ENCODE measurements at regions of chr17 and their contacts with region 1.

Region 1: DNA sequence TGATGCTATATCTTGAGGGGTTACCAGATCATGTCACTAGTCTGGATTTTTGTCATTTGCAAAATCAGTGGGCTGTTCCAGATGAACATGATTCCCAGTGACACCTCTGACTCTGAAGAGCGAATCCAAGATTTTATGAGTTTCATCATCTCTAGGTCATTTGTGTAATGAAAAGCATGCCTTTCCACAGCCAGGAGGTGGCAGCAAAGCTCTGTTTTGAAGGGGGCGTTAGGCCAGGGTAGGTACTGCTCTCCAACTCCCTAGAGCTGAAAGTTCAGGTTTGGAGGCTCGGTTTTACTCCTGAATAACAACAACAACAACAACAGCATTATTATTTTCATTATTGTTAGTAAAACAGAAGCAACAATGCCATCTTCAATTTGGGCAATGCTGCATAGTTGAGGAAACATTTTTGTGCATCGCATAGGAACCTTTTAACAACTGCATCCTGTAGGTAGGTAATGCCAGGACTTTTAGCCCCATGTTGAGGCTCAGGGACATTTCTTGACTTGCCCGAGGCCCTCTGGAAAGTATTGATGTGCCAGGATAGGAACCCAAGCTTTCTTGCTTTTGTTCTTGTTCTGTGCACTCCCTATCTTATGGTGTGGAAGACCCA is 77.0 kb downstream of the MYH13 start:
- DNase-seq: peak; percentile 21
- ATAC-seq: peak; percentile 77
- H3K4me3 ChIP-seq: no peak overlapping the region
- H3K27ac ChIP-seq: no peak overlapping the region
- H3K4me1 ChIP-seq: peaks cover 17% of the 10 kb centered on the region; the same call in 1 of the 2 replicates
- H3K27me3 ChIP-seq: no peaks in the 10 kb centered on the region
- CTCF ChIP-seq: peak; percentile 72 to 79 (median 77)
- EP300 ChIP-seq: no peak
- POLR2A ChIP-seq: no peak
- RAD21 ChIP-seq: peak; percentile 58

Region 2: DNA sequence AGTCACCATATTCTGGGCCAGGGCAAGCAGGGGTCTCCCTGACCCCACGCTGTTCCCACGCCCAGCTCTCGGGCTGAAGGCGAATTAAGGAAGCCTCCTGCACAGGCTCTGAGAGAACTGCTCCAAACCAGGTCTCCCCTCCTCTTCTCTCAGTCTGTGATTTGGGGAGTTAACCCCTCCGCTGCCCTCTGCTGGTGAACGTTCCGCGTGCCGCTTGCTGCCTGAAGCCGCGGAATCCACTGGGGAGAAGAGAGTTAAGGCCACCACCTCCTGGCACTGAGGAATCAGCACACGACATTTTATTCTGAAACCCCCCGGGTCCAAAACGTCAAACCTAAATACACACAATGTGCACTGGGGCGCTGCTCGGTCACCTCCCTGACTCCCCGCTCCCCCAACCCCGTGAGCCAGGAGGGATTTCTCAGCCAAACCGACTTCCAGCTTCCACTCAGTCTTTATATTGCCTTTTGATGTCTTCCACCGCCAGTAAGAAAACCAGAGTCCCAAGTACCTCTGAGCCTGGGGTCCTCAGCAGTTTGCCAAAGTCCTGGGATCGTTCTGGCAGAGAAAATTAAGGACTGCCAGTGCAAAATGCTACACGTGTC is 336.4 kb before region 1 on chr17:
- CTCF ChIA-PET with region 1: no interaction called
- POLR2A ChIA-PET with region 1: no interaction called
- RAD21 ChIA-PET with region 1: no interaction called
- SMC1A ChIA-PET with region 1: no interaction called
- in situ Hi-C with region 1: no loop called
- intact Hi-C with region 1: loop called (anchors 2 kb)
- DNase-seq: no peak
- ATAC-seq: peak; percentile 74
- H3K4me3 ChIP-seq: no peak overlapping the region
- H3K27ac ChIP-seq: no peak overlapping the region
- H3K4me1 ChIP-seq: no peaks in the 10 kb centered on the region
- H3K27me3 ChIP-seq: no peaks in the 10 kb centered on the region
- CTCF ChIP-seq: peak; percentile 52 to 59 (median 52); a peak in 5 of 6 replicates
- EP300 ChIP-seq: no peak
- POLR2A ChIP-seq: no peak
- RAD21 ChIP-seq: peak; percentile 29; the same call in 1 of the 2 replicates

Region 3: DNA sequence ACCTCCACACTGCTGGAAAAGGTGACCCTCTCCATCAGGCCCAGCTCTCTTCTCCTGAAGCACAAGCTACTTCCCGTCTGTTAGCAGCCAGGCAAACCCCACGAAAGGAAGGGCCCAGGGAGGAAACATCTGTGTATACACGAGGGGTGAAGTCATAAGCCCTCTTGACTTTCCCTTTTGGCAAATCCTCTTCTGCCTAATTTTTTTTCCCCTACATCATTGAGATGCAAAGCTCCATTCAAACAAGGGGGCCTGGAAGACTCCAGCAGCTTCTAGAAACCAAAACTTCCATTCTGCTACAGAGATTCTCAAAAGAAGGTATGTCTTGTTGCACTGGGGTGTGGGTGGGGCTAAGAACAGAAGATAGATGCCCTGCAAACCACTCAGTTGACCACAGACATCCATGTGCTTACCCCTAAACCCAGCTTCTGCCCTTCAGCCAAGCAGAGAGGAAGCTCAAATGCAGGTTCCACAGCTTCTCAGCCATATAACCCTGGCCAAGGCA is 245.2 kb before region 1 on chr17:
- CTCF ChIA-PET with region 1: no interaction called
- POLR2A ChIA-PET with region 1: no interaction called
- RAD21 ChIA-PET with region 1: no interaction called
- SMC1A ChIA-PET with region 1: no interaction called
- in situ Hi-C with region 1: no loop called
- intact Hi-C with region 1: no loop called
- DNase-seq: peak; percentile 68
- ATAC-seq: peak; percentile 48
- H3K4me3 ChIP-seq: peak overlapping the region; percentile 54; the same call in 1 of the 2 replicates
- H3K27ac ChIP-seq: peak overlapping the region; percentile 62
- H3K4me1 ChIP-seq: peaks cover 37% of the 10 kb centered on the region
- H3K27me3 ChIP-seq: no peaks in the 10 kb centered on the region
- CTCF ChIP-seq: no peak
- EP300 ChIP-seq: peak in 1 of 2 experiments; percentile 14; a peak in 1 of 4 replicates
- POLR2A ChIP-seq: 0 out of 2 replicates have a peak, but pooled peaks have one; percentile 16
- RAD21 ChIP-seq: no peak

Region 4: DNA sequence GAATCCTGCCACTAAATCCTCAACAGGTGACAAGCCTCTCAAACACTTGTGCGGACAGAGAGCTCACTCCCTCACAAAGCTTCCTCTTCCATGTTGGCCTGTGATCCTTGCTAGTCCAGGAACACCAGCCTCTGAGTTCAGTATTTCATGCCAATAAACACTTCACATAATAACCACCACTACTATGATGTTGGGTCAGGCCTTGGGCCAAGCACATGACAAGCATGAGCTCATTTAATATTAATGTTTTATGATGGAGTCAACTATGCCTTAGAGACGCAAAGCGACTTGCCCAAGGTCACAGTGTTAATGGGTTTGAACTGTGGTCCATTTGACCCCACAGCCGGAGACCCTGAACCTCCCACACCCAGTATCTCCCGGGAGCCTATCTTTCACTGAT is 226.5 kb before region 1 on chr17:
- CTCF ChIA-PET with region 1: no interaction called
- POLR2A ChIA-PET with region 1: no interaction called
- RAD21 ChIA-PET with region 1: no interaction called
- SMC1A ChIA-PET with region 1: no interaction called
- in situ Hi-C with region 1: no loop called
- intact Hi-C with region 1: no loop called
- DNase-seq: no peak
- ATAC-seq: no peak
- H3K4me3 ChIP-seq: no peak overlapping the region
- H3K27ac ChIP-seq: no peak overlapping the region
- H3K4me1 ChIP-seq: peaks cover 9% of the 10 kb centered on the region
- H3K27me3 ChIP-seq: no peaks in the 10 kb centered on the region
- CTCF ChIP-seq: no peak
- EP300 ChIP-seq: no peak
- POLR2A ChIP-seq: no peak
- RAD21 ChIP-seq: no peak

Region 5: DNA sequence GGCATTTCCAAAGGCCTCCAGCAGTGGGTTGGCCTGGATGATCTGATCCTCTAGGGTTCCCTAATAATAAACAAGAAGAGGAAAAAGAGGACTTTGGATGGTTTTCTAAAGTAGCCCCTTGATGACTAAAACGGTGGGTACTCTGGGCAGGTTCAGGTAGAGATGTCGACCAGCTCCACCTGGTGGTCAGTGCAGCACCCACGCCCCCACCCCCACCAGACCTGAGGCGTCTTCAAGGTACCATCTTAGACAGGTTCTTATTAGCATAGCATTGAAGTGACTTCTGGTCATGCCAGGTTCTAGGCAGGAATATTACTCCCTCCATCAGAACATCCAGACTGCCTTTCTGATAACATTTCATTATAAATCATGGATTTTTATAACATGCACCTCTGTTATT is 61.9 kb after region 1 on chr17:
- CTCF ChIA-PET with region 1: no interaction called
- POLR2A ChIA-PET with region 1: no interaction called
- RAD21 ChIA-PET with region 1: no interaction called
- SMC1A ChIA-PET with region 1: no interaction called
- in situ Hi-C with region 1: no loop called
- intact Hi-C with region 1: loop called (anchors 2 kb)
- DNase-seq: no peak
- ATAC-seq: peak; percentile 87
- H3K4me3 ChIP-seq: no peak overlapping the region
- H3K27ac ChIP-seq: no peak overlapping the region
- H3K4me1 ChIP-seq: no peaks in the 10 kb centered on the region
- H3K27me3 ChIP-seq: no peaks in the 10 kb centered on the region
- CTCF ChIP-seq: peak; percentile 53 to 67 (median 56)
- EP300 ChIP-seq: no peak
- POLR2A ChIP-seq: no peak
- RAD21 ChIP-seq: no peak

Measured in GM12878 (cell line).